ENCODE measurements at regions of chr10 and their contacts with region 1.

Region 1: DNA sequence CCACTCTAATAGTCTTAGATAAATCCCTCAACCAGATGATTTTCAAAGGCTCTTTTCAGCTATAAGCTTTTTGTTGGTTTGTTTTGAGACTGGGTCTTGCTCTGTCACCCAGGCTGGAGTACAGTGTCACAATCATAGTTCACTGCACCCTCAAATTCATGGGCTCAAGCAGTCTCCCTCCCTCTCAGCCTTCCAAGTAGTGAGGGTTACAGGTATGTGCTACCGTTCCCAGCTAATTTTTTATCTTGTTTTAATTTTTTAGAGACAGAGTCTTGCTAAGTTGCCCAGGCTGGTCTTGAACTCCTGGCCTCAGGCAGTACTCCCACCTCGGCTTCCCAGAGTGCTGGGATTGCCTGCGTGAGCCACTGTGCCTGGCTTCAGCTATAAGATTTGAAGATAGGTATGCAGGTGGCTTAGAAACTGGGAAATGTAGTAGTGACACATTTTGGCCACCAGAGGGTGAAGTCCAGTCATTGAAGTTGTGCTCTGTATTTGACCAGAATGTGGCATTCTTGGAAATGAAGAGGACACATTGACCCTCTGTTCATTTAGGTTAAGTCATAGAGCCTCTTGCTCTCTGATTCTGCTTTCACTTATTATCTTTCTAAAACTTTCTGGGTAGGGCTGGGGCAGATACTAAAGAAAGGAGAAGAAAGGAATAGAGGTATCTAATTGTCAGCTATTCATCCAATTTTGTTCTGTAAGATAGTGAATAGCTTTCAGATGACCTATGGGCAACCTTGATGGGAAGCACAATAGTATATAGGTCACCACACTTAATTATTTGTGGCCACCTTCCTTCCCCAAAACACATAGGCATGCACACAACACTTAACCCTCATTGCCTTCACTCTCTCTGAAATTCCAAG is 36.0 kb downstream of the R3HCC1L start:
- DNase-seq: no peak
- ATAC-seq: peak in 3 of 4 donors; percentile 48 to 81 (median 55)
- H3K4me3 ChIP-seq: no peak overlapping the region
- H3K27ac ChIP-seq: no peak overlapping the region
- H3K4me1 ChIP-seq: peaks cover 10% of the 10 kb centered on the region
- H3K27me3 ChIP-seq: no peaks in the 10 kb centered on the region
- CTCF ChIP-seq: peak; percentile 69

Region 2: GRCh38 chr10:98309366-98310355 is 139.2 kb after region 1 on chr10:
- intact Hi-C with region 1: loop called (anchors 5 to 10 kb)
- DNase-seq: peak; percentile 76 to 88
- ATAC-seq: peak; percentile 83 to 91 (median 90)
- H3K4me3 ChIP-seq: no peak overlapping the region
- H3K27ac ChIP-seq: no peak overlapping the region
- H3K4me1 ChIP-seq: peaks cover 10% of the 10 kb centered on the region
- H3K27me3 ChIP-seq: peaks cover 0 to 3% (median 0%) of the 10 kb centered on the region in 3 donors
- CTCF ChIP-seq: peak; percentile 86

Measured in psoas muscle (tissue), 8 donors.